ENCODE measurements at regions of chr14 and their contacts with region 1.

Region 1: GRCh38 chr14:75307700-75308379 is 29.2 kb downstream of the FOS start:
- DNase-seq: peak; percentile 90
- H3K4me3 Mint-ChIP-seq: no peak overlapping the region
- H3K27ac Mint-ChIP-seq: no peak overlapping the region
- H3K4me1 Mint-ChIP-seq: peaks cover 22% of the 10 kb centered on the region
- H3K27me3 Mint-ChIP-seq: no peaks in the 10 kb centered on the region
- CTCF ChIP-seq: peak; percentile 77

Region 2: GRCh38 chr14:75132382-75133086 is 175.3 kb before region 1 on chr14:
- CTCF ChIA-PET with region 1: no interaction called
- intact Hi-C with region 1: loop called (anchors 1 kb)
- DNase-seq: peak; percentile 65
- H3K4me3 Mint-ChIP-seq: no peak overlapping the region
- H3K27ac Mint-ChIP-seq: peak overlapping the region; percentile 72
- H3K4me1 Mint-ChIP-seq: peaks cover 16% of the 10 kb centered on the region
- H3K27me3 Mint-ChIP-seq: no peaks in the 10 kb centered on the region
- CTCF ChIP-seq: peak; percentile 56

Region 3: GRCh38 chr14:75487155-75487671 is 179.4 kb after region 1 on chr14:
- CTCF ChIA-PET with region 1: interaction called, 6 read pairs
- intact Hi-C with region 1: loop called (anchors 1 kb)
- DNase-seq: peak; percentile 17
- H3K4me3 Mint-ChIP-seq: no peak overlapping the region
- H3K27ac Mint-ChIP-seq: no peak overlapping the region
- H3K4me1 Mint-ChIP-seq: peaks cover 24% of the 10 kb centered on the region
- H3K27me3 Mint-ChIP-seq: no peaks in the 10 kb centered on the region
- CTCF ChIP-seq: no peak

Region 4: DNA sequence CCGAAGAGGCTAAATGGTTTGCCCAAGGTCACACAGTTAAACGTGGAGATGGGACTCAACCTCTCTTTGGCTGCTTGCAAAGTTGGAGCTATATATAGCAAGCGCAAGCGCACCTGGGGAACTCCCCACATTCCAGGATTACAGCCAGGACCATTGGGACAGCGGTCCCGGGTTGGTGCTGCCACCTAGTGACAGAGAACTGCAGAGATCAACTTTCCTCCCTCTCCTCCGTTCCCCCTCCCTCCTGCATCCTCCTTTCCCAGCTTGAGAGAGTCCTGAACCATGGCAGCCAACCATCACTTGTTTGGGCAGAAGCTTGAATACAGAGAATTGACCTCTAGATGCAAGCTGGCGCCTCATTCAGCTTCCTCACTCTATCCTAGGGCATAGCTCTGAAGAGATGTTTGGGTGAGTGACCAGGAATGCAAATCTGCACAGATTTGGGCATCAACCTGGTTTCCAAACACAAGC is 253.2 kb after region 1 on chr14:
- CTCF ChIA-PET with region 1: interaction called, 15 read pairs
- intact Hi-C with region 1: loop called (anchors 1 kb)
- DNase-seq: peak; percentile 89
- H3K4me3 Mint-ChIP-seq: no peak overlapping the region
- H3K27ac Mint-ChIP-seq: no peak overlapping the region
- H3K4me1 Mint-ChIP-seq: peaks cover 27% of the 10 kb centered on the region
- H3K27me3 Mint-ChIP-seq: peaks cover 13% of the 10 kb centered on the region
- CTCF ChIP-seq: peak; percentile 70

Region 5: GRCh38 chr14:75654127-75654732 is 346.4 kb after region 1 on chr14:
- CTCF ChIA-PET with region 1: no interaction called
- intact Hi-C with region 1: loop called (anchors 10 kb)
- DNase-seq: peak; percentile 82
- H3K4me3 Mint-ChIP-seq: no peak overlapping the region
- H3K27ac Mint-ChIP-seq: no peak overlapping the region
- H3K4me1 Mint-ChIP-seq: no peaks in the 10 kb centered on the region
- H3K27me3 Mint-ChIP-seq: no peaks in the 10 kb centered on the region
- CTCF ChIP-seq: peak; percentile 74